Caco-2 (cell line): ENCODE measurements at regions of chr3 and their contacts with region 1.

Region 1: GRCh38 chr3:138417559-138417982 is 16.8 kb upstream of the ESYT3 start:
- DNase-seq: peak; percentile 86 to 87
- H3K4me3 ChIP-seq: no peak overlapping the region
- H3K4me3 Mint-ChIP-seq: no peak overlapping the region
- H3K27ac Mint-ChIP-seq: no peak overlapping the region
- H3K4me1 ChIP-seq: no peaks in the 10 kb centered on the region
- H3K4me1 Mint-ChIP-seq: no peaks in the 10 kb centered on the region
- H3K27me3 ChIP-seq: no peaks in the 10 kb centered on the region
- H3K27me3 Mint-ChIP-seq: no peaks in the 10 kb centered on the region
- CTCF ChIP-seq: peak; percentile 89 to 93

Region 2: DNA sequence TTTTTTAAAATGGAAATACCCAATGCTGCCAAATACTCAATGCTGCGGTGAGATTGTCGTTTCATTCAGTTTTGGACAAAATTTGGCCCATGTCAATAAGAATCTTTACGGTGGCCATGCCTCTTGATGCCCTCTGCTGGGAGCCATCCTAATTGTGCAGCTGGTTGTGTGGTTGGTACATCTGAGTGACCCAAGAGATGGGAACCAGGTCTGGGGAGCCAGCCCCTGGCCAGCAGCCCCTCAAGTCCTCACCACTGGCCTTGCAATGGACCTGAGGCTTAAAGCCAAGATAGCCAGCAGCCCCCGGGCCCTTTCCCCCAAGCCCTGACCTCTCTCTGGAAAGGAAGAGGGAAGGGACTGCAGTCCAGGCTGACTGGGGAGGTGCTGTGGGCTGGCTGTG is 19.6 kb before region 1 on chr3:
- CTCF ChIA-PET with region 1: interaction called, 8 read pairs
- POLR2A ChIA-PET with region 1: no interaction called
- intact Hi-C with region 1: loop called (anchors 2 kb)
- DNase-seq: no peak
- H3K4me3 ChIP-seq: no peak overlapping the region
- H3K4me3 Mint-ChIP-seq: no peak overlapping the region
- H3K27ac Mint-ChIP-seq: no peak overlapping the region
- H3K4me1 ChIP-seq: peaks cover 30% of the 10 kb centered on the region
- H3K4me1 Mint-ChIP-seq: peaks cover 32% of the 10 kb centered on the region
- H3K27me3 ChIP-seq: no peaks in the 10 kb centered on the region
- H3K27me3 Mint-ChIP-seq: no peaks in the 10 kb centered on the region
- CTCF ChIP-seq: no peak

Region 3: DNA sequence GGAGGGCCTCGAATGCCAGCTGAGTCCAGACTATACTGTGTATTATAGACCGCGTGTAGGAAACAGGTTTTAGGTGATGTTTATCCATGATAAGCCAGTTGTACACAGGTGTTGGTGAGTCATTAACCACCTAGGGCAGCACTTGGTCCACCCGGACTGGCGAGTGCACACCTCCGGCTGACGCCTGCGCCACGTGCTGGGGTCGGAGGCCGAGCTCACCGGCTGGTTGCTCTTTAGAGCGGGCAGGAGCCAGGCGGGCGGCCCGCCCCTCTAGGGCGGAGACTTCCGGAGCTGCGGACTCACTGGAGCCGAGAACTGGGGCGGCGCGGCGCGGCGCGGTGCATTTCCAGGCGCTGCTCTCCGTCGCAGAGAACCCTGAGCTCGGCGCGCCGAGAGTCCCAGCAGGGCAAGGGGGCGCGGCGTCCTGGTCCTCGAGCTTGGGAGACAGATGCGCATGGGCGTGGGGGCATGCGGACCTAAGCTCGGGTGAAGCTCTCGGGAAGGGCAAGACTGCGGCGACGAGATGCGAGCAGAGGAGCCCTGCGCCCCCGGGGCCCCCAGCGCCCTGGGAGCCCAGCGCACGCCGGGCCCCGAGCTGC is 16.8 kb after region 1 on chr3 and contains the start of gene ESYT3:
- CTCF ChIA-PET with region 1: interaction called, 14 read pairs
- POLR2A ChIA-PET with region 1: no interaction called
- intact Hi-C with region 1: loop called (anchors 2 kb)
- DNase-seq: peak; percentile 94 to 95
- H3K4me3 ChIP-seq: peak within 1 kb of the TSS; percentile 78
- H3K4me3 Mint-ChIP-seq: peak within 1 kb of the TSS; percentile 80
- H3K27ac Mint-ChIP-seq: peak within 1 kb of the TSS; percentile 42
- H3K4me1 ChIP-seq: peaks cover 12% of the 10 kb centered on the region
- H3K4me1 Mint-ChIP-seq: peaks cover 7% of the 10 kb centered on the region
- H3K27me3 ChIP-seq: no peaks in the 10 kb centered on the region
- H3K27me3 Mint-ChIP-seq: no peaks in the 10 kb centered on the region
- CTCF ChIP-seq: no peak
- total RNA-seq, gene ESYT3: 5.7 and 7.6 TPM in 2 replicates

Region 4: DNA sequence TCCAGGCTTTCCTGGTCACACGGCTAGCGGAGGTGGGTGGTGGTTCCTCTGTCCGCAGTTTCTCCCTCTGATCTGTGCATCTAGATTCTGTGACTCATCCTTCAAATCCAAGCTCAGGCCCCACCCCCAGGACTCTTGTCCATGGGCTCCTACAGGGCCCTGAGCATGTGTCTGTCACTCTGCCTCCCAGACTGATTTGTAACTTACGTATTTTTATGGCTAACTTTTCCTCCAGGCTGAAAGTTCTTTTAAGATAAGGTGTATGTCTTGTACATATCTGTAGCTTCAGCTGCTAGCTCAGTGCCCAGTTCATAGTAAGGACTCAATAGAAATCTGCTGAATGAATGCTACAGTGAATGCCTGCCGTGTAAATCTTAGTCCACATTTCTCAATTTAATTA is 24.9 kb after region 1 on chr3:
- CTCF ChIA-PET with region 1: no interaction called
- POLR2A ChIA-PET with region 1: no interaction called
- intact Hi-C with region 1: loop called (anchors 1 kb)
- DNase-seq: peak; percentile 71 to 82
- H3K4me3 ChIP-seq: no peak overlapping the region
- H3K4me3 Mint-ChIP-seq: peak overlapping the region; percentile 33
- H3K27ac Mint-ChIP-seq: peak overlapping the region; percentile 50
- H3K4me1 ChIP-seq: peaks cover 32% of the 10 kb centered on the region
- H3K4me1 Mint-ChIP-seq: peaks cover 18% of the 10 kb centered on the region
- H3K27me3 ChIP-seq: no peaks in the 10 kb centered on the region
- H3K27me3 Mint-ChIP-seq: no peaks in the 10 kb centered on the region
- CTCF ChIP-seq: no peak

Region 5: DNA sequence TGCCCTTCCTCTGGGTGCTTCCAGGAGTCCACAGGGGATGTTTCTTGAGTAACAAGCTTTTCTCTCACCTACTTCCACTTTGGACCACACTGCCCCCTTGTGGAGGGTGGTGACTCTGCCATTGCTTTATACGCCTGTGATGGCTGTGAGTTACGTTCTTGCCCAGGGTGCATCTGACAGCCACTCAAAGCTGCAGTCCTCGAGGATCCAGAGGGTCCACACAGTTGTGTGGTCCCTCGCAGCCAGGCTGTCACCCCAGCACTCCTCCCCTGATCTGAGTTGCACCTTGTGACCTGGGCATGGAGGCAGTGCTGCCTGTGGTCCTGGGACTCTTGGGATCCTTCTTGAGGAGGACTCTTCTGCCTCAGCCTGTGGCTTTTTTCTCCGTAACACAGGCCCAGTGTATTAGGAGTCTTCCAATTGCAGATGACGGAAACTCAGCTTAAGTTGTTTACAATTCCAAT is 506.0 kb after region 1 on chr3:
- CTCF ChIA-PET with region 1: interaction called, 11 read pairs
- POLR2A ChIA-PET with region 1: no interaction called
- intact Hi-C with region 1: loop called (anchors 1 kb)
- DNase-seq: peak; percentile 82 to 89
- H3K4me3 ChIP-seq: no peak overlapping the region
- H3K4me3 Mint-ChIP-seq: no peak overlapping the region
- H3K27ac Mint-ChIP-seq: no peak overlapping the region
- H3K4me1 ChIP-seq: no peaks in the 10 kb centered on the region
- H3K4me1 Mint-ChIP-seq: no peaks in the 10 kb centered on the region
- H3K27me3 ChIP-seq: no peaks in the 10 kb centered on the region
- H3K27me3 Mint-ChIP-seq: no peaks in the 10 kb centered on the region
- CTCF ChIP-seq: peak; percentile 81 to 86